ENCODE measurements at regions of chr4 and their contacts with region 1.

Region 1: DNA sequence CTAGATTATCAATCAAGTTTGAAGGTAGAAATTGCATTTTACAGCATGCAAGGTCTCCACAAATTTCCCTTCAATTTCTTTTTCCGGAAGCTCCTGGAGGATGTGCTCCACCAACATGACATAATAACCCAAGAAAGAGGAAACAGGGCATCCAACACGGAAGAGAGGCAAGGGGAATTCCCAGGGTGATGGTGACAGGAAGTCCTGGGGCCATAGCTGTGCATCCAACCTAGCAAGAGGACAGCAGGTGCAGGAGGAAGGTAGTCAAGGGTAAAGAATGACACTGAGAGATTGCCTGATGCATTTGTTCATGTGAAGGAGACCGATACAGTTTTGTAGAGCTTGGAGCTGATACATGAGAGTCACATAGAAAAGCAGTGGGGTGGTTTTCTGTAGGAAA is 115.7 kb upstream of the LSM6 start:
- DNase-seq: peak; percentile 44
- CTCF ChIP-seq: no peak

Region 2: DNA sequence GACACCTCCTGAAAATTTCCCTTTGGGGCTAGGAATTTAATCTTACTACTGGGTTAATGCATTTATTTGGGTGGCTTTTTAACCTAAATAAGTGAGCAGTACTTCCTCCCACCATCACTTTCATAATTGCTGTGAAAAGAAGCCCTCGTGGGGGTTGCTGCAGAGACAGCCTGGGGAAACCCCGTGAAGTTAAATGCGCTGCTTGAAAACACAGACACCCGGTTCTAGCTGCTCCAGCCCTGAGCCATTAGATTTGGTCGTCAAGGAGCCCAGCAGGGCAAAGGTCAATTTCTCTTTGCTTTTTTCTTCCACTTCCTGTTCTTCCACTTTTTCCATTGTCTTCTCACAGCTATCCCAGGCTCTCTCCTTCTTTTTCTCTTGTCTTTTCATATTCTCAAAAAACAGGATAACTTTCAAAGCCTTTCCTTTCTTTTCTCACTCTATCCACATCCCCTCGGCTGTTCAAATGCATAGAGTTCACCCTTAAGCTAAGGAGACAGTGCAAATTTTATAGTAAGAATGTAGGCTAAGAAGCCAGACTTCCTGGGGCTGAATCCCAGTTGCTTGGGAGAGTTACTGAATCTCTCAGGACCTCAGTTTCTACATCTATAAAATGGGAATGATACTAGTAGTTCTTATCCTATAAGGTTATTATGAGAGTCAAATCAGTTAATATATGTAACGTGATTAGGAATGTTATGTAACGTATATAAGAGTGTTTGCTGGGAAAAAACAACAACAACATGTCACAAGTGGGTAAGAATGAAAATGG is 29.7 kb before region 1 on chr4:
- CTCF ChIA-PET with region 1: interaction called, 16 read pairs
- POLR2A ChIA-PET with region 1: no interaction called
- DNase-seq: peak; percentile 56
- CTCF ChIP-seq: no peak

Region 3: DNA sequence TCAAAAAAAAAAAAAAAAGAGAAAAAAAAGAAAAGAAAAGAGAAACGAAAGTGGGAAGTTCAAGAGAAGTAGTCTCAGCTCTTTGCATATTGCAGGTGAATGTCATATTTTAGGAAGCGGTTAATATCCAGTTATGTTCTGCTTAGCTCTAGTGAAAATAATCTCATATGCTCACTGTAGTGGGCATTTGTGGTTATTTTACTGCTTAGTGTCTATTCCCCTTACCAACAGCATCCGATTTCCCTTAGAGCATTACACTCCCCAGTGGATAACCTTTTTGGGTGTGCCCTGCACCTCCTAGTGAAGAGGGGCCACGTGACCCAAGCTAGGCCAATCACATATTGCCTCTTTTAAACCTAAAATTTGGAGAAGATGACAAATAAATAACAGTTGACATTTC is 10.1 kb before region 1 on chr4:
- CTCF ChIA-PET with region 1: interaction called, 16 read pairs
- POLR2A ChIA-PET with region 1: no interaction called
- DNase-seq: peak; percentile 54
- CTCF ChIP-seq: no peak

Measured in GM10248 (cell line).